Aorta (tissue), 5 donors: ENCODE measurements at regions of chr1 and their contacts with region 1.

Region 1: GRCh38 chr1:116570358-116571200 is at the start of gene CD58:
- DNase-seq: peak; percentile 96 to 97
- ATAC-seq: peak; percentile 94
- H3K4me3 ChIP-seq: peak within 1 kb of the TSS; percentile 47 to 72
- H3K27ac ChIP-seq: peak within 1 kb of the TSS; percentile 73 to 92
- H3K4me1 ChIP-seq: no peaks in the 10 kb centered on the region
- H3K27me3 ChIP-seq: no peaks in the 10 kb centered on the region
- total RNA-seq, gene CD58: 28.6 to 30.7 TPM

Region 2: GRCh38 chr1:116372587-116373444 is 197.8 kb before region 1 on chr1 and contains the start of gene ATP1A1:
- intact Hi-C with region 1: loop called in 1 of 2 experiments (anchors 5 kb)
- DNase-seq: peak; percentile 99 to 100
- ATAC-seq: peak; percentile 94
- H3K4me3 ChIP-seq: peak within 1 kb of the TSS; percentile 99
- H3K27ac ChIP-seq: peak within 1 kb of the TSS; percentile 97 to 98
- H3K4me1 ChIP-seq: peaks cover 0 to 12% of the 10 kb centered on the region in 2 donors
- H3K27me3 ChIP-seq: no peaks in the 10 kb centered on the region
- total RNA-seq, gene ATP1A1: 200 to 216 TPM

Region 3: DNA sequence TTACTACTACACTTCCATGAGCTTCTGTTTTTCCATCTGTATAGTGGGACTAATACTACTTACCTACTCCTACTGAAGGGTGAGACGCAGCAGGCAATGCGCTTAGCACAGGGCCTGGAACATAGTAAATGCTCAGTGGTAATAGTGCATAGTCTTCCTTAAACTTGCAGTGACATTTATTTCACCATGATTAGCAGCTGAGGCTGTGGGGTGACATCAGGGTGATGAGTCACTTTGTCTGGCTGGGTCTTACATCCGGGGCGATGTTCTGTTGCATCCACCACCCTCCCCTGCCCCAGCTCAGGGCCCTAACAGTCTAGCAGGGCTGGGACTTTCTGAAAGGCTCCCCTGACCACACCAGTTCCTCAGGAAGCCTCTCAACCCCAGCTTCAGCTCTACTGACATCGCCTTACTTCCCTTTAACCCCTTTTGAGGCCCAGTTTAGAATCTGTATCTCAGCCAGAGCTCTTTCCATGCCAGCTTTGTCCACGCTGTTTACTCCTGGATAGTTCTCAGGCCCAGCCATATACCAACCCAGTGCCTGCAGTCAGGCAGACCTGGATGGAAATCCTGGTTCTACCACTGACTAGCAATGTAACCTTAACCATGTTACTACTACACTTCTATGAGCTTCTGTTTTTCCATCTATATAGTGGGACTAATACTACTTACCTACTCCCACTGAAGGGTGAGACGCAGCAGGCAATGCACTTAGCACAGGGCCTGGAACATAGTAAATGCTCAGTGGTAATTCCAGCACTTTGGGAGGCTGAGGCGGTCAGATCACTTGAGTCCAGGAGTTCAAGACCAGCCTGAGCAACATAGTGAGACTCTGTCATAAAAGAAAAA is 66.0 kb before region 1 on chr1:
- intact Hi-C with region 1: loop called in 1 of 2 experiments (anchors 5 kb)
- DNase-seq: peak in 1 of 2 donors; percentile 92
- ATAC-seq: peak; percentile 80
- H3K4me3 ChIP-seq: no peak overlapping the region
- H3K27ac ChIP-seq: peak overlapping the region in 1 of 2 donors; percentile 22
- H3K4me1 ChIP-seq: peaks cover 0 to 2% of the 10 kb centered on the region in 2 donors
- H3K27me3 ChIP-seq: no peaks in the 10 kb centered on the region

Region 4: GRCh38 chr1:116521186-116521585 is 49.4 kb before region 1 on chr1:
- intact Hi-C with region 1: loop called in 1 of 2 experiments (anchors 5 kb)
- DNase-seq: no peak
- ATAC-seq: peak; percentile 76
- H3K4me3 ChIP-seq: no peak overlapping the region
- H3K27ac ChIP-seq: peak overlapping the region; percentile 51 to 81
- H3K4me1 ChIP-seq: no peaks in the 10 kb centered on the region
- H3K27me3 ChIP-seq: no peaks in the 10 kb centered on the region

Region 5: GRCh38 chr1:117059678-117060440 is 489.3 kb after region 1 on chr1 and contains the start of gene TTF2:
- intact Hi-C with region 1: loop called (anchors 5 kb)
- DNase-seq: peak; percentile 94 to 95
- ATAC-seq: peak; percentile 99
- H3K4me3 ChIP-seq: peak within 1 kb of the TSS; percentile 30 to 59
- H3K27ac ChIP-seq: peak within 1 kb of the TSS in 1 of 2 donors; percentile 37
- H3K4me1 ChIP-seq: no peaks in the 10 kb centered on the region
- H3K27me3 ChIP-seq: no peaks in the 10 kb centered on the region
- total RNA-seq, gene TTF2: 12.5 to 18.8 TPM

Region 6: GRCh38 chr1:117121776-117122697 is 551.5 kb after region 1 on chr1:
- intact Hi-C with region 1: loop called in 1 of 2 experiments (anchors 10 kb)
- DNase-seq: peak; percentile 98 to 99
- ATAC-seq: peak; percentile 98
- H3K4me3 ChIP-seq: peak overlapping the region; percentile 48 to 61
- H3K27ac ChIP-seq: peak overlapping the region in 1 of 2 donors; percentile 78
- H3K4me1 ChIP-seq: no peaks in the 10 kb centered on the region
- H3K27me3 ChIP-seq: no peaks in the 10 kb centered on the region